ENCODE measurements at regions of chr3 and their contacts with region 1.

Region 1: DNA sequence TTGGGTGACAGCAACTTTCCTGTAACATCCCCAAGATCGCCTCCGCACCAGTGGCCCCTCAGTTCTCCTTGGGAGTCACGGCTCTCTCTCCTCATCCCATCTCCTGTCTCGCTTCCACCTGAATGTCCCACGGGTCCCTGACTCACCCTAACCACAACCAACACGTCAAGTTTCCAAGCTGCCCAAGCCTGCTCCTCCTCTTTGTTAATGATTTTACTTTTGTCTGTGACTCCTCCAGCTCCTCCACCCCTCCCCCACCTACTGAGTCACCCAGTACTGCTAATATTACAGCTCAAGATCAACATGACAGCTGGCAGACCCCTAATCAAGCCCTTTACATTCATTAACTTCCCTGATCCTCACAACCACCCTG is 39.3 kb downstream of the BDH1 start:
- DNase-seq: peak; percentile 42 to 87 (median 67)
- H3K4me3 ChIP-seq: no peak overlapping the region
- H3K27ac ChIP-seq: no peak overlapping the region
- H3K4me1 ChIP-seq: peaks cover 3 to 12% (median 4%) of the 10 kb centered on the region in 3 donors
- H3K27me3 ChIP-seq: no peaks in the 10 kb centered on the region
- CTCF ChIP-seq: no peak

Region 2: GRCh38 chr3:197256836-197257444 is 259.6 kb before region 1 on chr3:
- intact Hi-C with region 1: loop called (anchors 10 kb)
- DNase-seq: peak in 3 of 5 donors; percentile 22 to 70 (median 69)
- H3K4me3 ChIP-seq: no peak overlapping the region
- H3K27ac ChIP-seq: no peak overlapping the region
- H3K4me1 ChIP-seq: no peaks in the 10 kb centered on the region
- H3K27me3 ChIP-seq: no peaks in the 10 kb centered on the region
- CTCF ChIP-seq: peak; percentile 44

Region 3: DNA sequence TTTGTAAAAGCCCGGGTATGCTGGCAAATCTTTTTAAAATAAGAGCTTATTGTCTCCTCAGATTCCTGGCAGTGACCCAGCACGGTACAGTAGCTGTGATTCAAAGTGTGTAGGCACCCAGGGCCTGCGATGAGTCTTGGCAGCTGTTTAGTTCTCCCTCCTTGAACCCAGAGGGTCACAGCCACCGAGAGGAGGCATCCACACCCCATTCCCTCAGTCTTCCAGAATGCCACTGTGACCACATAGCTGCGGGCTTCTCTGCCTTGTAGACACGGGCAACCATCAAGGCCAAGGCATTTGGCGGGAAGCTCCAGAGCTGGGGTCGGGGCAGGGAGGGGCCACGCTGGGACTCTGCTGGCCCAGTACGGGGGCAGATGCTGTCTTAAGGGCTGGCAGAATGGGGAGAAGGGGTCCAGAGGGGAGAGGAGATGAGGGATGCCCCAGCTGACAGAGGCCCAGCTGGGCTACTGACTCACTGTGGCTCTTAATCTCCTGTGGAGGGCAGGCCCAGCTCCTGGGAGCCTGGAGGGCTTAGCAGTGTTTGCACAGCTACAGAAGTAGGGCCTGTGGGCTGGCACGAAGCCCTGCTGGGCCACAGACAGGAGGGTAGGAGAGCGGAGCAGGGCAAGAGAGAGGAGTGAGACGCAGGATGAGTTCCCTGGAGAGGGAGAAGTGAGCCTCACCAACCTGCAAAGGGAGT is 149.3 kb before region 1 on chr3:
- intact Hi-C with region 1: no loop called
- DNase-seq: no peak
- H3K4me3 ChIP-seq: no peak overlapping the region
- H3K27ac ChIP-seq: no peak overlapping the region
- H3K4me1 ChIP-seq: peaks cover 0 to under 1% (median 0%) of the 10 kb centered on the region in 3 donors
- H3K27me3 ChIP-seq: no peaks in the 10 kb centered on the region
- CTCF ChIP-seq: no peak

Measured in kidney (tissue), 22 donors.